ENCODE measurements at regions of chr3 and their contacts with region 1.

Region 1: DNA sequence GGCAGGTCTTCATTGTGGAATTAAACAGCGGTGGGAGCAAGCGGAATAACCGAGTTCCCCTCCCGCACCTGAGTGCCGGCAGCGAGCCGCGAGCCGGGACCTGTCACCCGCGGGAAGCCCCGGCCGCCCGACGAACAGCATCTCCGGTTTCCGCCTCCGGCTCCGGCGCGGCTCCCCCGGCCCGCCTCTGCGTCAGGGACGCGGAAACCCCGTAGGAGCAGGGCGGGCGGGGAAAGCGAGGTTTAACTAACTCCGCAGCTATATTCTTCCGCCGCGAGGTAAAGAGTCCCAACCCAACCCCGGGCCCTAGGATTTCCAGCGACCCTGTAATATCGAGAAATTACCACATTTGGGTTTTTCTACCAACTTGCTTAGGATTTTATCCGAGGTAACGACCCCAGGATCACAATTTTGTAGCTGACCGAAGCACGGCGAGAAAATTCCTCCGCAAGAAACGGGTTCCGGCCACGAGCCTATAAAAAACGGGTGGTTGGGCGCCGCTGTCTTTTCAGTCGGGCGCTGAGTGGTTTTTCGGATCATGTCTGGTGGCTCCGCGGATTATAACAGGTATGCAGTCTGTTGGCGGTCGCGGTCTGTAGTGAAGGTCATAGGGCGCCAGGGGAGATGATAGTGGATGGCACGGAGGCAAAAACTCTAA is at the start of gene EIF4A2:
- DNase-seq: peak; percentile 86 to 95 (median 89)
- H3K4me3 ChIP-seq: peak within 1 kb of the TSS; percentile 88 to 99 (median 93)
- H3K4me3 Mint-ChIP-seq: peak within 1 kb of the TSS; percentile 98 to 99
- H3K27ac ChIP-seq: peak within 1 kb of the TSS; percentile 95 to 99
- H3K27ac Mint-ChIP-seq: peak within 1 kb of the TSS; percentile 96 to 100 (median 99)
- H3K4me1 ChIP-seq: peaks cover 20 to 39% of the 10 kb centered on the region in 2 donors
- H3K4me1 Mint-ChIP-seq: peaks cover 29% of the 10 kb centered on the region
- H3K27me3 ChIP-seq: no peaks in the 10 kb centered on the region
- H3K27me3 Mint-ChIP-seq: peaks cover 0 to 5% (median 2%) of the 10 kb centered on the region in 3 donors
- CTCF ChIP-seq: no peak
- polyA plus RNA-seq, gene EIF4A2: 67.0 to 405 (median 73.0) TPM

Region 2: GRCh38 chr3:185937689-185938463 is 845.3 kb before region 1 on chr3 and contains the start of gene TRA2B:
- intact Hi-C with region 1: loop called in 1 of 2 experiments (anchors 10 kb)
- DNase-seq: peak; percentile 98 to 99 (median 99)
- H3K4me3 ChIP-seq: peak within 1 kb of the TSS; percentile 76 to 100 (median 99)
- H3K4me3 Mint-ChIP-seq: peak within 1 kb of the TSS; percentile 100
- H3K27ac ChIP-seq: peak within 1 kb of the TSS; percentile 97 to 99
- H3K27ac Mint-ChIP-seq: peak within 1 kb of the TSS; percentile 100
- H3K4me1 ChIP-seq: peaks cover 32 to 39% of the 10 kb centered on the region in 2 donors
- H3K4me1 Mint-ChIP-seq: peaks cover 37% of the 10 kb centered on the region
- H3K27me3 ChIP-seq: no peaks in the 10 kb centered on the region
- H3K27me3 Mint-ChIP-seq: peaks cover 0 to 4% (median 0%) of the 10 kb centered on the region in 3 donors
- CTCF ChIP-seq: peak; percentile 44
- polyA plus RNA-seq, gene TRA2B: 99.9 to 507 (median 121) TPM

Region 3: GRCh38 chr3:186570096-186570940 is 212.9 kb before region 1 on chr3 and contains the start of gene DNAJB11:
- intact Hi-C with region 1: loop called in 1 of 2 experiments (anchors 10 kb)
- DNase-seq: peak; percentile 99 to 100 (median 100)
- H3K4me3 ChIP-seq: peak within 1 kb of the TSS; percentile 78 to 96 (median 88)
- H3K4me3 Mint-ChIP-seq: peak within 1 kb of the TSS; percentile 96 to 97
- H3K27ac ChIP-seq: peak within 1 kb of the TSS; percentile 52 to 94
- H3K27ac Mint-ChIP-seq: peak within 1 kb of the TSS; percentile 92 to 99 (median 97)
- H3K4me1 ChIP-seq: peaks cover 30 to 41% of the 10 kb centered on the region in 2 donors
- H3K4me1 Mint-ChIP-seq: peaks cover 35% of the 10 kb centered on the region
- H3K27me3 ChIP-seq: no peaks in the 10 kb centered on the region
- H3K27me3 Mint-ChIP-seq: no peaks in the 10 kb centered on the region
- CTCF ChIP-seq: no peak
- polyA plus RNA-seq, gene DNAJB11: 32.5 to 45.8 (median 44.6) TPM

Region 4: GRCh38 chr3:186826976-186827731 is 44.0 kb after region 1 on chr3:
- intact Hi-C with region 1: loop called in 1 of 2 experiments (anchors 5 kb)
- DNase-seq: peak; percentile 76 to 89 (median 84)
- H3K4me3 ChIP-seq: peak overlapping the region; percentile 45 to 80 (median 69)
- H3K4me3 Mint-ChIP-seq: peak overlapping the region; percentile 76 to 89
- H3K27ac ChIP-seq: no peak overlapping the region
- H3K27ac Mint-ChIP-seq: no peak overlapping the region
- H3K4me1 ChIP-seq: peaks cover 12 to 29% of the 10 kb centered on the region in 2 donors
- H3K4me1 Mint-ChIP-seq: peaks cover 22% of the 10 kb centered on the region
- H3K27me3 ChIP-seq: peaks cover 65 to 77% of the 10 kb centered on the region in 2 donors
- H3K27me3 Mint-ChIP-seq: peaks cover 69 to 83% (median 82%) of the 10 kb centered on the region in 3 donors
- CTCF ChIP-seq: no peak

Region 5: DNA sequence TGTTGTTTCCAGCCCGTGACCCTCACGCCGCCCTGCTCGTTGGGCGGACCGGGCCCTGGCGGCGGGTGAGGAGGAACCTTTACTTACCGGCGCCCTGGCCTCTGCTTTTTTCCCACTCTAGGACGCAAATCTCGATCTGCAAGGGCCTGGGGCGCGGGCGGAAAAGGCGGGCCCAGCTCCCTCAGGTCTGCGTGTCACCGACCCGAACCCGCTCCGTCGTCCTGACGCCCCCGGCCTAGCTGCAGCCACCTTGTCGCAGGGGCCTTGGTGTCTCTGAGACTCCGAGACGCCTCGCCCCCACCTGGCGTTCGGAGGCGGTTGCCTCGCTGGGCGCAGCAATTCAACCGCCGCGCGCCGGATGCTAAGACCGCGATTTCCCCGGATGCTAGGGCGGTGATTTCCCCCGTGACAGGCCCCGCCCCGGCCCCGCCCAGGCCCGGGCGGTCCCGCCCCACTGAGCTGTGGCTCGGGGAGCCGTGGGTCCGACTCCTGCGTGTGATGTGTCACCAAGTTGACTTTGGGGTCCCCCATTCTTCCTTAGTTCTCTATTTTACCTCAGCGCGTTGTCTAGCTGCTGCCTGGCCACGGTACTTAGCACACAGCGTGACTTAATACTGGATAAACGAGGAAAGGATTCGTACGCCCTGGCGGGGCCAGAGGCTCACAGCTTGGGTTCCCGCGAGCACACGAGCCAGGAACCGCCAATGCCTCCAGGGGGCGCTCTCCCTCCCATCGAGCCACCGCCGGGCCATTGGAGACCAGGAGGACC is 356.1 kb after region 1 on chr3 and contains the start of gene RPL39L:
- intact Hi-C with region 1: loop called in 1 of 2 experiments (anchors 10 kb)
- DNase-seq: peak; percentile 77 to 91 (median 80)
- H3K4me3 ChIP-seq: peak within 1 kb of the TSS; percentile 66 to 73 (median 69)
- H3K4me3 Mint-ChIP-seq: peak within 1 kb of the TSS; percentile 84 to 91
- H3K27ac ChIP-seq: peak within 1 kb of the TSS; percentile 33 to 46
- H3K27ac Mint-ChIP-seq: peak within 1 kb of the TSS; percentile 70 to 89 (median 83)
- H3K4me1 ChIP-seq: peaks cover 16 to 17% of the 10 kb centered on the region in 2 donors
- H3K4me1 Mint-ChIP-seq: peaks cover 17% of the 10 kb centered on the region
- H3K27me3 ChIP-seq: no peaks in the 10 kb centered on the region
- H3K27me3 Mint-ChIP-seq: peaks cover 1 to 6% (median 4%) of the 10 kb centered on the region in 3 donors
- CTCF ChIP-seq: peak; percentile 88
- polyA plus RNA-seq, gene RPL39L: 1.1 to 3.4 (median 3.1) TPM